Caco-2 (cell line): ENCODE measurements at regions of chr5 and their contacts with region 1.

Region 1: DNA sequence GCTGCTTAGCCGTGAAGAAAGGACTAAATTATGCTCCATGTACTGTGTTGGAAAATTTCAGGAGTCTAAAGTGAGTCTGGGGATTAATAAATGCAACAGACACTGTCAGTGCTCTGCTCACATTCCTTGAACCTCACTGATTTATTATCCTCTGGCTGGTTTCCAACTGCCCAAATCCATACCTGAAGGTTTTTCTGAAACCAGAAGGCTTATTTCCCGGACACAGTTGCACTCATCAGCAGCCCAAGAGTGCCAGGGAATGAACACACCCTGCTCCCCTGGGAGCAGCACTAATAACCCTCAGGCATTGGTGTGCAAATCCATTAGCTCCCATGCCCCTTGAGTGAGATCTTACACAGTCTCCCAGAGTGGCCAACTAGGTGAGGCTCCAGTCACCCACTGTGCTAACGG is 38.7 kb downstream of the F2R start:
- DNase-seq: no peak
- H3K4me3 ChIP-seq: no peak overlapping the region
- H3K4me3 Mint-ChIP-seq: no peak overlapping the region
- H3K27ac Mint-ChIP-seq: no peak overlapping the region
- H3K4me1 ChIP-seq: peaks cover 27% of the 10 kb centered on the region
- H3K4me1 Mint-ChIP-seq: peaks cover 14% of the 10 kb centered on the region
- H3K27me3 ChIP-seq: no peaks in the 10 kb centered on the region
- H3K27me3 Mint-ChIP-seq: no peaks in the 10 kb centered on the region
- CTCF ChIP-seq: no peak

Region 2: GRCh38 chr5:76269932-76270610 is 484.6 kb before region 1 on chr5:
- CTCF ChIA-PET with region 1: no interaction called
- POLR2A ChIA-PET with region 1: no interaction called
- intact Hi-C with region 1: no loop called
- DNase-seq: no peak
- H3K4me3 ChIP-seq: no peak overlapping the region
- H3K4me3 Mint-ChIP-seq: no peak overlapping the region
- H3K27ac Mint-ChIP-seq: no peak overlapping the region
- H3K4me1 ChIP-seq: peaks cover 14% of the 10 kb centered on the region; the same call in 1 of the 2 replicates
- H3K4me1 Mint-ChIP-seq: peaks cover 10% of the 10 kb centered on the region
- H3K27me3 ChIP-seq: no peaks in the 10 kb centered on the region
- H3K27me3 Mint-ChIP-seq: no peaks in the 10 kb centered on the region
- CTCF ChIP-seq: no peak

Region 3: GRCh38 chr5:76601470-76601869 is 153.2 kb before region 1 on chr5:
- CTCF ChIA-PET with region 1: no interaction called
- POLR2A ChIA-PET with region 1: no interaction called
- intact Hi-C with region 1: no loop called
- DNase-seq: peak in 1 of 2 experiments; percentile 62
- H3K4me3 ChIP-seq: no peak overlapping the region
- H3K4me3 Mint-ChIP-seq: no peak overlapping the region
- H3K27ac Mint-ChIP-seq: no peak overlapping the region
- H3K4me1 ChIP-seq: no peaks in the 10 kb centered on the region
- H3K4me1 Mint-ChIP-seq: peaks cover 9% of the 10 kb centered on the region
- H3K27me3 ChIP-seq: no peaks in the 10 kb centered on the region
- H3K27me3 Mint-ChIP-seq: no peaks in the 10 kb centered on the region
- CTCF ChIP-seq: peak; percentile 70 to 82

Region 4: GRCh38 chr5:76818844-76819831 is 64.5 kb after region 1 on chr5 and contains the start of gene F2RL1:
- CTCF ChIA-PET with region 1: interaction called, 4 read pairs
- POLR2A ChIA-PET with region 1: interaction called, 15 read pairs
- intact Hi-C with region 1: no loop called
- DNase-seq: peak; percentile 96 to 98
- H3K4me3 ChIP-seq: peak within 1 kb of the TSS; percentile 96
- H3K4me3 Mint-ChIP-seq: peak within 1 kb of the TSS; percentile 89
- H3K27ac Mint-ChIP-seq: peak within 1 kb of the TSS; percentile 95
- H3K4me1 ChIP-seq: peaks cover 40% of the 10 kb centered on the region
- H3K4me1 Mint-ChIP-seq: peaks cover 25% of the 10 kb centered on the region
- H3K27me3 ChIP-seq: no peaks in the 10 kb centered on the region
- H3K27me3 Mint-ChIP-seq: no peaks in the 10 kb centered on the region
- CTCF ChIP-seq: no peak
- total RNA-seq, gene F2RL1: 50.0 and 51.8 TPM in 2 replicates